Caco-2 (cell line): ENCODE measurements at regions of chr11 and their contacts with region 1.

Region 1: GRCh38 chr11:67401495-67402191 is at the start of gene PPP1CA:
- DNase-seq: peak; percentile 94 to 98
- H3K4me3 ChIP-seq: peak within 1 kb of the TSS; percentile 69
- H3K4me3 Mint-ChIP-seq: peak within 1 kb of the TSS; percentile 75
- H3K27ac Mint-ChIP-seq: peak within 1 kb of the TSS; percentile 74
- H3K4me1 ChIP-seq: peaks cover 14% of the 10 kb centered on the region
- H3K4me1 Mint-ChIP-seq: peaks cover 2% of the 10 kb centered on the region
- H3K27me3 ChIP-seq: no peaks in the 10 kb centered on the region
- H3K27me3 Mint-ChIP-seq: no peaks in the 10 kb centered on the region
- CTCF ChIP-seq: peak; percentile 41 to 58
- total RNA-seq, gene PPP1CA: 384 and 389 TPM in 2 replicates

Region 2: GRCh38 chr11:67345920-67346799 is 55.5 kb before region 1 on chr11:
- CTCF ChIA-PET with region 1: interaction called, 16 read pairs
- POLR2A ChIA-PET with region 1: interaction called, 4 read pairs
- intact Hi-C with region 1: no loop called
- DNase-seq: peak; percentile 82 to 87
- H3K4me3 ChIP-seq: no peak overlapping the region
- H3K4me3 Mint-ChIP-seq: peak overlapping the region; percentile 4
- H3K27ac Mint-ChIP-seq: peak overlapping the region; percentile 41
- H3K4me1 ChIP-seq: peaks cover 32% of the 10 kb centered on the region
- H3K4me1 Mint-ChIP-seq: peaks cover 35% of the 10 kb centered on the region
- H3K27me3 ChIP-seq: no peaks in the 10 kb centered on the region
- H3K27me3 Mint-ChIP-seq: no peaks in the 10 kb centered on the region
- CTCF ChIP-seq: peak; percentile 89 to 99

Region 3: DNA sequence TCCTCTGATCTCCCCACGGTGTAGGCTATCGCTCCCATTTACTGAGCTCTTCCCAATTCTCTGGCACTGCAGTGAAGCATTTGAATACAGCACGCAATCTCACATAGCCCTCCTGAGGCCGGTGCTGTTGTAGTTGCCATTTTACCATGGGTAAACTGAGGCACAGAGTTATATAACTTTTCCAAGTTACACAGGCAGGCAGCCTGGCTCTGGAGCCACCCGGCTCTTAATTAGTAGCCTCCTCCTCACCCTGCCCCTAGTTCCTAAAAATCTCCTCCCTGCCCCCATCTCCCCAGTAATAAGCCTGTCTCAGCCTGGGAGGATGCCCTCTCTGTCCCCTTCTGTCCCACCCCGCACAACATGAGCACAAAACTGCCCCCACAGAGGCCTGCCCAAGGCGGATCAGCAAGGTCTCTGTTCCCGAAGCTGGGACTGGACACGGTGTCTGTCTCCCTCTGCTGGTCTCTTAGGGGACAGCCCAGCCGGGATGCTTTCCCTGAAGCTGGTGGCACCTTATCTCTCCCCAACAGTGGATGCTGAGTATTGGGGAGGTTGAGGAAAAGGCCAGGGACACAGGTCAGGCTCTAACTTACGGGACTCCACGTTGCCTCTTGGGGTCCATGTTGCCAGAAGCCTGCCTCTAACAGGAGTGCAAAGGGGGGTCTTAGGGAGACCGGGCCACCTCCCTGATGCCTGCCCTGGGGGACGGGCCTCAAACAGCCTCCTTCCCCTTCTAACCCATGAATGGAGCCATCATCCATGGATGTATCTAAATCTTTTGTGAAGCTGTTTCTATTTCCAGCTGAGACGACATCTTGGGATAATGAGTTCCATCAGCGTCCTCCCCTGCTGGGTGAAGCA is 19.1 kb before region 1 on chr11:
- CTCF ChIA-PET with region 1: interaction called, 12 read pairs
- POLR2A ChIA-PET with region 1: no interaction called
- intact Hi-C with region 1: no loop called
- DNase-seq: peak; percentile 90 to 94
- H3K4me3 ChIP-seq: no peak overlapping the region
- H3K4me3 Mint-ChIP-seq: no peak overlapping the region
- H3K27ac Mint-ChIP-seq: no peak overlapping the region
- H3K4me1 ChIP-seq: peaks cover 14% of the 10 kb centered on the region
- H3K4me1 Mint-ChIP-seq: peaks cover 6% of the 10 kb centered on the region
- H3K27me3 ChIP-seq: 0 out of 2 replicates have a peak, but pooled peaks cover 3% of the 10 kb centered on the region
- H3K27me3 Mint-ChIP-seq: peaks cover 7% of the 10 kb centered on the region
- CTCF ChIP-seq: peak; percentile 99 to 100

Region 4: DNA sequence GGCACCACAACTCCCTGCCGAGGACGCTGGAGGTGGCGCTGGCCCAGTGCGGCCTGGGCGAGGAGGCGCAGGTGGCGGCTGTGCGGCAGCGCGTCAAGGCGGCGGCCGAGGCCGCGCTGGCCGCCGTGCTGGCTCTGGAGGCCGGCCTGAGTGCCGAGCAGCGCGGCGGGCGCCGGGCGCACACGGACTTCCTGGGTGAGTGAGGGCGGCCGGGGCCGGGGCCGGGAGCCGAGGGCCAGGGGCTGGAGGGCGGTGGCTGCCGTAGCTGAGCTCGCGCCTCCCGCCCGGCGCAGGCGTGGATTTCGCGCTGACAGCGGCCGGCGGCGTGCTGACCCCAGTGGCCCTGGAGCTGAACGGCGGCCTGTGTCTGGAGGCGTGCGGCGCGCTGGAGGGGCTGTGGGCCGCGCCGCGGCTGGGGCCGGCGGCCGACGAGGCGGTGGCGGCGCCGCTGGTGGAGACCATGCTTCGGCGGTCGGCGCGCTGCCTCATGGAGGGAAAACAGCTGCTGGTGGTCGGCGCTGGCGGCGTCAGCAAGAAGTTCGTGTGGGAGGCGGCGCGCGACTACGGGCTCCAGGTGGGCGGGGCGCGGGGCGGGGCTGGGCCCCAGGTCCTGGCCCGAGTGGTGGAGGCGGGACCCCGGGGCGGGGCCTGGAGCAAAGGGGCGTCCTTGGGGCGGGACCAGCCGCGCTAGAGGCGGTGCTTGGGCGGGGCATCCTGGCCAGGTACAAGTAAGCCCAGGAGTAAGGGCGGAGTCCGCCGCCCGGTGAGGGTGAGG is 19.2 kb after region 1 on chr11:
- CTCF ChIA-PET with region 1: interaction called, 45 read pairs
- POLR2A ChIA-PET with region 1: interaction called, 18 read pairs
- intact Hi-C with region 1: loop called (anchors 1 kb)
- DNase-seq: peak; percentile 99 to 100
- H3K4me3 ChIP-seq: peak overlapping the region; percentile 59
- H3K4me3 Mint-ChIP-seq: peak overlapping the region; percentile 71
- H3K27ac Mint-ChIP-seq: peak overlapping the region; percentile 68
- H3K4me1 ChIP-seq: peaks cover 13% of the 10 kb centered on the region
- H3K4me1 Mint-ChIP-seq: peaks cover 32% of the 10 kb centered on the region
- H3K27me3 ChIP-seq: no peaks in the 10 kb centered on the region
- H3K27me3 Mint-ChIP-seq: no peaks in the 10 kb centered on the region
- CTCF ChIP-seq: no peak

Region 5: DNA sequence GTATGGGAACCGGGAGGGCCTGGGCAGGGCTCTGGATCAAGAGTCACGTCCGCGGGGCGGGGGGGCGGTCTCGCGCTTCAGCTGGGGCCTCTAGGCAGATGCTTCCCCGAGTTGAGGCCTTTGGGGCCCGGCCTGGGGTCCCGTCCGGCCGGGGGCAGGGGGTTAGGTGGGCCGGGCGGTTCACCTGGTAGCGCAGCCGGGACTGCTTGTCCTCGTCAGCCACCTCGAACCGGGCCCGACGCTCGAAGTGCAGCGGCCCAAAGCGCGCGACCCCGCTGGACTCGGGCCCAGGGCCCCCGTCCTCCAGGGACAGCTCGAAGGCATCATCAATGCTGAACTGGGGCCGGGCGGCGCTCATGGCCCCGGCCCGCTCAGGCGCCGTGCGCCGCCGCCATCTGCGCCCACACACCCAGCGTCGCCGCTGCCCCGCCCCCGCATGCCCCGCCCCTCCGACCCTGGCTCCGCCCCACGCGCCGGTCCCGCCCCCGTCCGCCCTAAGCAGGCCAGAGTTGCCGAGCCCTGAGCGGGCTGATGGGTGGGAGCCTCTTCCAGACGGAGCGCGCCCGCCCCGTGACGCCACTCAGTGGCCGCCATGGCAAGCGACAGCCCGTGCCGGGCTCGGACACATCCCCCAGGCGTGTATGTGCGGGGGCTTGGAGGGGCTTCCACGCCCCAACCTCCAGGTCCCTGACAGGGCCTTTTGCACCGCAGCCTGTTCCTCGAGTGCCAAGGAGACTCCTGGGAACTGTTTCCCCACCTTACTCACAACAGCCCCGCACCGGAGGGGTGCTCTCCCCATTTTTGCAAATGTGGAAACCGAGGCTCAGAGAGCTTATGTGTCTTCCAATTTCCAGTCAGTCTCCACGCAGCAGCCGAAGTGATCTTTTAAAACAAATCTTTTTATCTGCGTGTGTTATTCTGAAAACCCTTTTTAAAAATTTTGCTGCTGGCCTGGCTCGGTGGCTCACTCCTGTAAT is 67.5 kb after region 1 on chr11 and contains the start of gene TMEM134:
- CTCF ChIA-PET with region 1: interaction called, 38 read pairs
- POLR2A ChIA-PET with region 1: interaction called, 10 read pairs
- intact Hi-C with region 1: loop called (anchors 1 kb)
- DNase-seq: peak; percentile 96 to 98
- H3K4me3 ChIP-seq: peak within 1 kb of the TSS; percentile 69
- H3K4me3 Mint-ChIP-seq: peak within 1 kb of the TSS; percentile 94
- H3K27ac Mint-ChIP-seq: peak within 1 kb of the TSS; percentile 89
- H3K4me1 ChIP-seq: peaks cover 23% of the 10 kb centered on the region
- H3K4me1 Mint-ChIP-seq: peaks cover 20% of the 10 kb centered on the region
- H3K27me3 ChIP-seq: no peaks in the 10 kb centered on the region
- H3K27me3 Mint-ChIP-seq: no peaks in the 10 kb centered on the region
- CTCF ChIP-seq: peak; percentile 54 to 85
- total RNA-seq, gene TMEM134: 47.9 and 52.2 TPM in 2 replicates

Region 6: DNA sequence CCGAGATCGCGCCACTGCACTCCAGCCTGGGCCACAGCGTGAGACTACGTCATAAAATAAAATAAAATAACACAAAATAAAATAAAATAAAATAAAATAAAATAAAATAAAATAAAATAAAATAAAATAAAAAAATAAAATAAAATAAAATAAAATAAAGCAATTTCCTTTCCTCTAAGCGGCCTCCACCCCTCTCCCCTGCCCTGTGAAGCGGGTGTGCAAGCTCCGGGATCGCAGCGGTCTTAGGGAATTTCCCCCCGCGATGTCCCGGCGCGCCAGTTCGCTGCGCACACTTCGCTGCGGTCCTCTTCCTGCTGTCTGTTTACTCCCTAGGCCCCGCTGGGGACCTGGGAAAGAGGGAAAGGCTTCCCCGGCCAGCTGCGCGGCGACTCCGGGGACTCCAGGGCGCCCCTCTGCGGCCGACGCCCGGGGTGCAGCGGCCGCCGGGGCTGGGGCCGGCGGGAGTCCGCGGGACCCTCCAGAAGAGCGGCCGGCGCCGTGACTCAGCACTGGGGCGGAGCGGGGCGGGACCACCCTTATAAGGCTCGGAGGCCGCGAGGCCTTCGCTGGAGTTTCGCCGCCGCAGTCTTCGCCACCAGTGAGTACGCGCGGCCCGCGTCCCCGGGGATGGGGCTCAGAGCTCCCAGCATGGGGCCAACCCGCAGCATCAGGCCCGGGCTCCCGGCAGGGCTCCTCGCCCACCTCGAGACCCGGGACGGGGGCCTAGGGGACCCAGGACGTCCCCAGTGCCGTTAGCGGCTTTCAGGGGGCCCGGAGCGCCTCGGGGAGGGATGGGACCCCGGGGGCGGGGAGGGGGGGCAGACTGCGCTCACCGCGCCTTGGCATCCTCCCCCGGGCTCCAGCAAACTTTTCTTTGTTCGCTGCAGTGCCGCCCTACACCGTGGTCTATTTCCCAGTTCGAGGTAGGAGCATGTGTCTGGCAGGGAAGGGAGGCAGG is 181.9 kb after region 1 on chr11 and contains the start of gene GSTP1:
- CTCF ChIA-PET with region 1: interaction called, 3 read pairs
- POLR2A ChIA-PET with region 1: interaction called, 10 read pairs
- intact Hi-C with region 1: no loop called
- DNase-seq: peak; percentile 93 to 98
- H3K4me3 ChIP-seq: peak within 1 kb of the TSS; percentile 87
- H3K4me3 Mint-ChIP-seq: peak within 1 kb of the TSS; percentile 75
- H3K27ac Mint-ChIP-seq: peak within 1 kb of the TSS; percentile 85
- H3K4me1 ChIP-seq: peaks cover 48% of the 10 kb centered on the region
- H3K4me1 Mint-ChIP-seq: peaks cover 61% of the 10 kb centered on the region
- H3K27me3 ChIP-seq: no peaks in the 10 kb centered on the region
- H3K27me3 Mint-ChIP-seq: no peaks in the 10 kb centered on the region
- CTCF ChIP-seq: peak; percentile 62 to 93
- total RNA-seq, gene GSTP1: 1,799 and 1,911 TPM in 2 replicates